CD4-positive, alpha-beta memory T cell (primary cell): ENCODE measurements at regions of chr3 and their contacts with region 1.

Region 1: DNA sequence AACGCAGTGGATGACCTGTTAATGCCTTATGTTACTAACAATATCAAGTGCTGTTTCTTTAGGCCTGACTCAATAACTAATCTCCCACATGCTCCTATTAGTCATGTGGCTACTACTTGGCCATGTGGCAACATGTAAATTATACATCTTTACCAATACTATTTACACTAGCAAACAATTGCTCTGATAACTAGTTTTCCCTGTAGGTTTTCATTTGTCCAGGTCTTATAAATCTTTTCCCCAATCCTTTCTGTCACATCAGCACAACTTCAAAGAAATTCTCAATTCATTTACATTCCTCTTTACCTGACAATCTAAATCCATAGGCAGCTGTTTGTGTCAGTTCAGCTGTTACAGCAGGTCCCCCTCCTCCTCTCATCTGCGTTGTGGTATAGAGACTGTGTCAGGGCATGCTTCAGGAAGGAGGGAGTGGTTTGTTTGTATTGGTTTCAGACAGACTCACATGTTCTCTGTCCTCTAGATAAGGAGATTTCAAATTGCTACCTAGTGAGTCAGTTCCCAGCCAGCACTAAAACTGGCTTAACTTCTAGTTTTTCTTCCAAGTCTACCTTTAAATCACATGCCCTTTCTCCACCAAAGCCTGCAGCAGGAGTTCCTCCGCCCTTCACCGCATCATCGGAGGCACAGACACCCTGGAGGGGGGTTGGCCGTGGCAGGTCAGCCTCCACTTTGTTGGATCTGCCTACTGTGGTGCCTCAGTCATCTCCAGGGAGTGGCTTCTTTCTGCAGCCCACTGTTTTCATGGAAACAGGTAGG is 11.3 kb upstream of the C3orf52 start:
- DNase-seq: peak; percentile 38 to 68 (median 61)
- H3K4me3 ChIP-seq: no peak overlapping the region
- H3K4me3 Mint-ChIP-seq: peak overlapping the region; percentile 37 to 82 (median 72)
- H3K27ac ChIP-seq: peak overlapping the region; percentile 21
- H3K27ac Mint-ChIP-seq: peak overlapping the region; percentile 65 to 93 (median 83)
- H3K4me1 ChIP-seq: peaks cover 35% of the 10 kb centered on the region
- H3K4me1 Mint-ChIP-seq: peaks cover 28 to 60% (median 40%) of the 10 kb centered on the region in 4 donors
- H3K27me3 ChIP-seq: no peaks in the 10 kb centered on the region
- H3K27me3 Mint-ChIP-seq: no peaks in the 10 kb centered on the region

Region 2: DNA sequence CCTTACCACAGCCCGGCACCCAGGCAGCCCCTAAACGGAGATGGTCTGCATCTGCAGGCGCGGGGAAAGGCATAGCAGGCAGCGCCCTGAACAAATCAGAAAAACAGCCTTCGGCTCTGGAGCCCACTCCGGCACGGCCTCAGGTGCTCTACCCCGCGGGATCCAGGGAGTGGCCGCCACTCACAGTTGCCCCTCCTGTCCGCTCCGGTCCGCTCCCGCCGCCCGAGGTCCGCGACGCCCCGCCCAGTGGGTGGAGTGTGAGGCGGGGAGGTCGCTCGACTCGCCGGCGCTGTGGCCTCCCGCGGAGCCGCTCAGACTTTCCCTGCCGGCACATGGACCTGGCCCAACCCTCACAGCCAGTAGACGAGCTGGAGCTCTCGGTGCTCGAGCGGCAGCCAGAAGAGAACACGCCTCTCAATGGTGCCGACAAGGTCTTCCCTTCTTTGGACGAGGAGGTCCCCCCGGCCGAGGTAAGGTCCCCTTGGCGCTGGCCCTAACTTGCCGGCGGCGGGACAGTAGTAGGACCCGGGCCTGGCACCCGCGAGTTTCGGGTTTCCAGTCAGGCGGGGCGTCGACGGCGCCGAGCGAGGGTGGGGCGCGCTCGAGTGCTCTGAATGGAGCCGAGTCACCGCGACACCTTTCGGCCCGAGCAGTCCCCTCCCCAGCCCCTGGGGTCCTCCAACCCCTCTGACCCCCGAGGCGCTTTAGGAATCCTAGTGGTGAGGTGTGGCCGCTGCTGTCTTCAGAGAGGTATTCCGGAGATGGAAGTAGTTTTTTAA is 11.4 kb after region 1 on chr3 and contains the start of gene C3orf52:
- CTCF ChIA-PET with region 1: interaction called, 3 read pairs
- POLR2A ChIA-PET with region 1: interaction called, 5 read pairs
- intact Hi-C with region 1: loop called (anchors 1 kb)
- DNase-seq: peak; percentile 45 to 57 (median 55)
- H3K4me3 ChIP-seq: peak within 1 kb of the TSS; percentile 17 to 55
- H3K4me3 Mint-ChIP-seq: peak within 1 kb of the TSS; percentile 83 to 87 (median 86)
- H3K27ac ChIP-seq: no peak within 1 kb of the TSS
- H3K27ac Mint-ChIP-seq: peak within 1 kb of the TSS; percentile 16 to 84 (median 73)
- H3K4me1 ChIP-seq: peaks cover 24% of the 10 kb centered on the region
- H3K4me1 Mint-ChIP-seq: peaks cover 16 to 41% (median 25%) of the 10 kb centered on the region in 4 donors
- H3K27me3 ChIP-seq: no peaks in the 10 kb centered on the region
- H3K27me3 Mint-ChIP-seq: peaks cover 0 to 5% of the 10 kb centered on the region in 2 donors
- total RNA-seq, gene C3orf52: 2.0 to 2.3 TPM

Region 3: DNA sequence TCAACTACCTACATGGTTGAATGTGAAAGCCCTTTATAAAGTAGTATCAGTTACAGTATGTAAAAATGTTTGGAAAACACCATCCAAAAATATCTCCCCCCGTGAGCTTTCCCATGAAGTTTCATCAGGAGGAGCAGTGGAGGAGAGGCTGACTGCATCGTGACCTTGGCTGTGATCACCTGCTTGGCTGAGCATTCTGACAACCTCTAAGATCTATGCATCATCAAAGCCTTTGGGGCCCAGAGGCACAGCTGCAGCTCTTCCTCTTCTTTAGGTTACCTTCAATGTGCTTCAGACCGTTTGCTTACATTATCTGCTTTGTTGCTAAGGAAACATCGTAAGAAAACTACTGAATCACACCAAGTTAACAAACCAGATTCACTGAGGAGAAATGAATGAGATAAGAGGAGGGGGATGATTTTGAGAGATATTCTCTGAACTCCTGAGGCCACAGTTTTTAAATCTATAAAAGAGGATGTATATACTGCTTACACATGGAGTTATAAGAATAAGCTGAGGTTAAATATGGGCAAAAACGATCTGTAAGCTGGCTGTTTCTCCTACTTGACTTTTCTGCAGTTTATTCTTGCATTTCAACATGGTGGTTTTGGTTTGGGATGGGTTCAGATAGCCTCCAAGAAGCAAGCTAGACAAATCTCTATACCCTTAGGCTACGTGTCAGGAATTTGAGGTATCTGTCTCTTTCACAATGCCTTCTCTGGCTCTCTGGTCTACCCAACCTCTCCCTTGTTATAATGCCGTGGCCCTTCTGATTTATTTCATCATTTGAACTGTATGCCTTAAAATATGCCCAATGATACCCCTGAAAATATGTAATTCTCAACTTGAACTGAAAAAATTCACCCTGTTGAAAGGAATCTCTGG is 54.2 kb after region 1 on chr3:
- CTCF ChIA-PET with region 1: interaction called, 3 read pairs
- POLR2A ChIA-PET with region 1: interaction called, 4 read pairs
- intact Hi-C with region 1: loop called (anchors 2 kb)
- DNase-seq: peak; percentile 78 to 86 (median 82)
- H3K4me3 ChIP-seq: no peak overlapping the region
- H3K4me3 Mint-ChIP-seq: peak overlapping the region in 7 of 8 donors; percentile 38 to 74 (median 59)
- H3K27ac ChIP-seq: peak overlapping the region; percentile 67
- H3K27ac Mint-ChIP-seq: peak overlapping the region; percentile 78 to 97 (median 95)
- H3K4me1 ChIP-seq: peaks cover 93% of the 10 kb centered on the region
- H3K4me1 Mint-ChIP-seq: peaks cover 70 to 93% (median 82%) of the 10 kb centered on the region in 4 donors
- H3K27me3 ChIP-seq: no peaks in the 10 kb centered on the region
- H3K27me3 Mint-ChIP-seq: no peaks in the 10 kb centered on the region

Region 4: DNA sequence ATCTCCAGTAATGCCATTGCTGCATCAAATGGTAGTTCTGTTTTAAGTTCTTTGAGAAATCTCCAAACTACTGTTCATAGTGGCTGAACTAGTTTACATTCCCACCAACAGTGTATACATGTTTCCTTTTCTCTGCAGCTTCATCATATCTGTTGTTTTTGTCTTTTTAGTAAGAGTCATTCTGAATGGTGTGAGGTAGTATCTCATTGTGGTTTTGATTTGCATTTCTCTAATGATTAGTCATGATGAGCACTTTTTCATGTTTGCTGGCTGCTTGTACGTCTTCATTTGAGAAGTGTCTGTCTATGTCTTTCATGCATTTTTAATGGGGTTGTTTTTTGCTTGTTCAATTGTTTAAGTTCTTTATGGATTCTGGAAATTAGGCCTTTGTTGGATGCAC is 68.3 kb after region 1 on chr3:
- CTCF ChIA-PET with region 1: no interaction called
- POLR2A ChIA-PET with region 1: no interaction called
- intact Hi-C with region 1: no loop called
- DNase-seq: no peak
- H3K4me3 ChIP-seq: no peak overlapping the region
- H3K4me3 Mint-ChIP-seq: peak overlapping the region; percentile 71 to 88 (median 84)
- H3K27ac ChIP-seq: no peak overlapping the region
- H3K27ac Mint-ChIP-seq: peak overlapping the region; percentile 44 to 89 (median 83)
- H3K4me1 ChIP-seq: peaks cover 7% of the 10 kb centered on the region
- H3K4me1 Mint-ChIP-seq: peaks cover 8 to 13% (median 10%) of the 10 kb centered on the region in 4 donors
- H3K27me3 ChIP-seq: no peaks in the 10 kb centered on the region
- H3K27me3 Mint-ChIP-seq: no peaks in the 10 kb centered on the region

Region 5: DNA sequence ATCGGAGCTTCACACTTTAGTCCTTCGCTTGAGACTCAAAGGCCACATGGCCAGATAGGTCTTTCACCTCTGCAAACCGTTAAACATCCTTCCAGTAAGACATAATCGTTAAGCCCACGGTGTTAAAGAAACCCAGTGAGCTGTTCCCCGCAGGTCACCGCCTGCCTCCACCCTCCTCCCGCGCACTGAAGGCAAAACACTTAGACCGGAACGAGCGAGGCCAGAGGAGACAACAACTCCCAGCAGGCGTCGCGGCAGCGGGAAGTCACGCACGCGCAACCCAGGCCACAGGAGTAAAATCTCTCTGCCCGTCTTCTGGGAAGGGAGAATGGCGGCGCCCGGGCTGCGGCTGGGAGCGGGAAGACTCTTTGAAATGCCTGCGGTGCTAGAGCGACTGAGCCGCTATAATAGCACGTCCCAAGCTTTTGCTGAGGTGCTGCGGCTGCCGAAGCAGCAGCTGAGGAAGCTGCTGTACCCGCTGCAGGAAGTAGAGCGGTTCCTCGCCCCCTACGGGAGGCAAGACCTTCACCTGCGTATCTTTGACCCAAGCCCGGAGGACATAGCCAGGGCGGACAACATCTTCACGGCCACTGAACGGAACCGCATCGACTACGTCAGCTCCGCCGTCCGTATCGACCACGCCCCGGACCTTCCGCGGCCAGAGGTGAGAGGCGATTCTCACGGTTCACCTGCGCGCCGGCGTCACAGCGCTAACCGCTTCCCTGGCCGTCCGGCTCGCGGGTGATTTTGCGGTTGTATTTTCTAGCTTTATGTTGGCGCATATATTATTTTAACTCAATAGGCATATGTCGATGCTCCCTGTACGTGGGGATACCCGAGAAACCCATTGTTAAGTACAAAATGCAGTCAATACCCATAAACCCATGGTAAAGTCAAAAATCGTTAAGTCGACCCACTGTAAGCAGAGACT is 916.0 kb after region 1 on chr3 and contains the start of gene GTPBP8:
- CTCF ChIA-PET with region 1: no interaction called
- POLR2A ChIA-PET with region 1: no interaction called
- intact Hi-C with region 1: loop called (anchors 10 kb)
- DNase-seq: peak; percentile 79 to 88 (median 81)
- H3K4me3 ChIP-seq: peak within 1 kb of the TSS; percentile 73 to 91
- H3K4me3 Mint-ChIP-seq: peak within 1 kb of the TSS; percentile 95 to 98 (median 96)
- H3K27ac ChIP-seq: peak within 1 kb of the TSS; percentile 78
- H3K27ac Mint-ChIP-seq: peak within 1 kb of the TSS; percentile 94 to 98 (median 96)
- H3K4me1 ChIP-seq: peaks cover 49% of the 10 kb centered on the region
- H3K4me1 Mint-ChIP-seq: peaks cover 51 to 80% (median 62%) of the 10 kb centered on the region in 4 donors
- H3K27me3 ChIP-seq: no peaks in the 10 kb centered on the region
- H3K27me3 Mint-ChIP-seq: no peaks in the 10 kb centered on the region
- total RNA-seq, gene GTPBP8: 36.0 to 40.0 TPM